Mammary epithelial cell (primary cell): ENCODE measurements at regions of chr5 and their contacts with region 1.

Region 1: DNA sequence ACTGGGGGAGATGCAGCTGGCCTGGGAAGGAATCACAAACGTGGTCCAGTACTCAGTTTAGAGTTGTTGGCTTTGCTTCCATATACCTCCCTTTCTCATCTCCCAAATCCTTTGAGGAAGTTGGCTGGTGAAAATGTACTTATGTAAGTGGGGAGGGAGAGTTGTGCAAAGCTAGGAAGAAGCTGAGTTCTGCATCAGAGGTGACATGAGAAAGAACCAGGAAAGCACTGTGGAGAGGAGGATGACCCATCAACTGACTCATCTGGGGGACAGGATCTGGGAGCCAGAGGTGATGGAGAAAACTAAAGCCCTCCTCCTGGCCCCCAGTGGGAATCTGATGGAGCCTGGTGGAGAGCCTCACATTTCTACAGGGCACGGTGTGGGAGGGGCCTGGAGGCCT is 16.2 kb downstream of the KCNMB1 start:
- DNase-seq: no peak
- H3K4me3 ChIP-seq: no peak overlapping the region
- H3K27ac ChIP-seq: no peak overlapping the region
- H3K4me1 ChIP-seq: no peaks in the 10 kb centered on the region
- H3K27me3 ChIP-seq: peaks cover 4% of the 10 kb centered on the region
- CTCF ChIP-seq: no peak

Region 2: DNA sequence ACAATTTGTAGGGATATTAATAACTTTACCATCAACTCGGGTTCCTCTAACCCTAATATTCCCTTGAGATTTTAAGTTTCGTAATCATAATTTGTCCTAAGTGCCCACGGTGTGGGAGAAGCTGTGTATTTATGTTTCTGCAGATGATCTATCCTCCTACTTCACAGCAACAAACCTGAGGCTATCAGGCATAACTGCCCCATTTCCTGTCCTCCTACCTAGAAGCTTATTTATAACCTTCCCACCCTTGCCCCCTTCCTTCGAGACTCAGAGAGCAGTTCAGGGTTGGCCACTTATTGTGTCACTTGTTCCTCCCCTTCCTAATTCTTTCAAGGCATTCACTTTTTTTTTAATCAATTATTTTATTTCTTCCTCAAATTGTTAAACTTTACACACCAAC is 45.8 kb before region 1 on chr5:
- CTCF ChIA-PET with region 1: no interaction called
- dilution Hi-C with region 1: loop called (anchors 5 kb)
- in situ Hi-C with region 1: no loop called
- intact Hi-C with region 1: no loop called
- DNase-seq: no peak
- H3K4me3 ChIP-seq: no peak overlapping the region
- H3K27ac ChIP-seq: no peak overlapping the region
- H3K4me1 ChIP-seq: peaks cover 6% of the 10 kb centered on the region
- H3K27me3 ChIP-seq: no peaks in the 10 kb centered on the region
- CTCF ChIP-seq: no peak